SK-N-SH (cell line): ENCODE measurements at regions of chr5 and their contacts with region 1.

Region 1: GRCh38 chr5:179678223-179679013 is 2.4 kb downstream of the CBY3 start:
- DNase-seq: peak; percentile 98
- H3K4me3 ChIP-seq: peak overlapping the region; percentile 68 to 99
- H3K27ac ChIP-seq: peak overlapping the region; percentile 70 to 75
- H3K4me1 ChIP-seq: peaks cover 8 to 11% of the 10 kb centered on the region in 2 experiments; a peak in 2 of 4 replicates
- H3K27me3 ChIP-seq: no peaks in the 10 kb centered on the region
- CTCF ChIP-seq: no peak
- EP300 ChIP-seq: no peak
- RAD21 ChIP-seq: peak; percentile 11; the same call in 1 of the 2 replicates

Region 2: DNA sequence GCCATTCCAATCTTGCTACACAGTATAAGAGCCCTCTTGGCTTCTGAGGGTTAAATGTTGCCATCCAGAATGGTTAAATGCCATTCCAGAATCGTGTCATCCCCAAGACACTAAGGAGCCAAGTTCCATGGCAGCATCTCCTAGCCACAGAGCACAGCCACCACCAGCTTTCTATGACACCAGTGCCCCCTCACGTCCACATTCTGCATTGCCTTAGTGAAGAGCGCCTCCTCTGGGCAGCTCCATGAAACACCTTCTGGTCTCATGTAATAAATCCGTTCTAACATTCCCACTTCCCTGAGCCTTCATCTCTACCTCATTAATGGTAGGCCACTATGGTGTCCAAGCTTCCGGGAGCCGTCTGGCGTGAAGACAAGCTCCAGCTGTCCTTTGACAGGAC is 10.0 kb before region 1 on chr5:
- CTCF ChIA-PET with region 1: interaction called, 12 read pairs
- POLR2A ChIA-PET with region 1: no interaction called
- DNase-seq: peak; percentile 52
- H3K4me3 ChIP-seq: peak overlapping the region in 1 of 2 experiments; percentile 45; a peak in 1 of 4 replicates
- H3K27ac ChIP-seq: no peak overlapping the region
- H3K4me1 ChIP-seq: no peaks in the 10 kb centered on the region
- H3K27me3 ChIP-seq: no peaks in the 10 kb centered on the region
- CTCF ChIP-seq: peak; percentile 59
- EP300 ChIP-seq: no peak
- RAD21 ChIP-seq: peak; percentile 59